ENCODE measurements at regions of chr6 and their contacts with region 1.

Region 1: GRCh38 chr6:85126485-85127167 is 323.3 kb upstream of the NT5E start:
- DNase-seq: peak in 1 of 2 donors; percentile 68
- H3K4me3 ChIP-seq: peak overlapping the region in 1 of 2 donors; percentile 6
- H3K27ac ChIP-seq: no peak overlapping the region
- H3K4me1 ChIP-seq: peaks cover 0 to 2% of the 10 kb centered on the region in 2 donors
- H3K27me3 ChIP-seq: no peaks in the 10 kb centered on the region
- CTCF ChIP-seq: peak; percentile 24 to 50 (median 27)

Region 2: GRCh38 chr6:84422380-84422968 is 704.2 kb before region 1 on chr6:
- intact Hi-C with region 1: loop called (anchors 5 kb)
- DNase-seq: peak in 1 of 2 donors; percentile 81
- H3K4me3 ChIP-seq: peak overlapping the region in 1 of 2 donors; percentile 8
- H3K27ac ChIP-seq: no peak overlapping the region
- H3K4me1 ChIP-seq: peaks cover 0 to 11% of the 10 kb centered on the region in 2 donors
- H3K27me3 ChIP-seq: no peaks in the 10 kb centered on the region
- CTCF ChIP-seq: peak; percentile 73 to 88 (median 76)

Region 3: GRCh38 chr6:84652356-84653026 is 474.1 kb before region 1 on chr6:
- intact Hi-C with region 1: no loop called
- DNase-seq: no peak
- H3K4me3 ChIP-seq: no peak overlapping the region
- H3K27ac ChIP-seq: peak overlapping the region; percentile 35 to 54
- H3K4me1 ChIP-seq: peaks cover 9 to 24% of the 10 kb centered on the region in 2 donors
- H3K27me3 ChIP-seq: no peaks in the 10 kb centered on the region
- CTCF ChIP-seq: no peak

Region 4: DNA sequence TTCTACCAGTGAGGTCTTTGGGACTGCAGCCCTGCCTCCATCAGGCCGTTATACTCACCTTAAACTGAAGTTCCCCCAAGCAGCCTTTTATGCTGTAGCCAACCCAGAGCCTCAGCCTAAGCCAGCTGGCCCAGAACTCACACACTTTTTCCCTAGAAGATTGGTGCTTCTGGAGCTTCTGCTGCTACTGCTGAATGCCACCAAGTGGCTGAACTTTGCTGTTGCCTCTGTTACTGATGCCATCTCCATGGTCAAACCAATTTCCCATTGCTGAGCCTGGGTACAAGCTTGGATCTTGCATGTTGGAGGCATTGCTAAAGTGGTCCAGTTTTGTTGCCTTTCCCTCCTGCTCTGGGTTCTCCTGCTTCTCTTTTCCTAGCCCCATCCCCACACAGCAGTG is 347.2 kb before region 1 on chr6:
- intact Hi-C with region 1: loop called (anchors 5 kb)
- DNase-seq: no peak
- H3K4me3 ChIP-seq: no peak overlapping the region
- H3K27ac ChIP-seq: no peak overlapping the region
- H3K4me1 ChIP-seq: no peaks in the 10 kb centered on the region
- H3K27me3 ChIP-seq: no peaks in the 10 kb centered on the region
- CTCF ChIP-seq: peak in 1 of 3 experiments; percentile 12

Region 5: DNA sequence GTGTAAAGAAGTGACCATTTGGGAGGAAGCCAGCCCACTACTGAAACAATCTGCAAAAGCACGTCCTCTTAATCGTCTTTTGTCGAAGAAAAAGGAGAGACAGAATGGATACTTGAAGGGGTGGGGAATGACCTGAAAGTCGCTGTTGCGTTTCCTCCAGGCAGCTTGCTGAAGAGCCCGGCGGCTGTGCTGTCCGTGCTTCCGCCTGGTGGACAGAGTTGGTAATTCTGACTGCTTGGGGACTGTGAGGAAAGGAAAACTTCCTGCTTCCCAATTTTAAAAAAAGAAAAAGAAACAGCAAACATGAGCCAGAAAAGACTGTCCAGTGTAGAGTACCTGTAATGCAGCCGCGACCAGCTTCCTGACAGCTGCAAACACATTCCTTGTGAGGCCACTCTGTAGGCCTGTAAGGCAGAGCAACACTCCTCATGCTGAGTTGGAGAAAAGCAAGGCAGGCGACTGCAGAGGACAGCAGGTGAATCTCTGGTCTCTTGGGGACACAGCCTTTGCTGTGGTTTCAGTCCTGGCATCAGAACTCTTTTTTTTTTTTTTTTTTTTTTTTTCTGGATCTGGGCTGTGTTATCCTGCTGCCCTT is 111.1 kb before region 1 on chr6:
- intact Hi-C with region 1: loop called (anchors 5 kb)
- DNase-seq: peak in 1 of 2 donors; percentile 66
- H3K4me3 ChIP-seq: no peak overlapping the region
- H3K27ac ChIP-seq: no peak overlapping the region
- H3K4me1 ChIP-seq: no peaks in the 10 kb centered on the region
- H3K27me3 ChIP-seq: no peaks in the 10 kb centered on the region
- CTCF ChIP-seq: peak; percentile 40 to 73 (median 54)

Measured in ascending aorta (tissue), 2 donors.